Cardiac septum (tissue), 1 donor: ENCODE measurements at regions of chr1 and their contacts with region 1.

Region 1: DNA sequence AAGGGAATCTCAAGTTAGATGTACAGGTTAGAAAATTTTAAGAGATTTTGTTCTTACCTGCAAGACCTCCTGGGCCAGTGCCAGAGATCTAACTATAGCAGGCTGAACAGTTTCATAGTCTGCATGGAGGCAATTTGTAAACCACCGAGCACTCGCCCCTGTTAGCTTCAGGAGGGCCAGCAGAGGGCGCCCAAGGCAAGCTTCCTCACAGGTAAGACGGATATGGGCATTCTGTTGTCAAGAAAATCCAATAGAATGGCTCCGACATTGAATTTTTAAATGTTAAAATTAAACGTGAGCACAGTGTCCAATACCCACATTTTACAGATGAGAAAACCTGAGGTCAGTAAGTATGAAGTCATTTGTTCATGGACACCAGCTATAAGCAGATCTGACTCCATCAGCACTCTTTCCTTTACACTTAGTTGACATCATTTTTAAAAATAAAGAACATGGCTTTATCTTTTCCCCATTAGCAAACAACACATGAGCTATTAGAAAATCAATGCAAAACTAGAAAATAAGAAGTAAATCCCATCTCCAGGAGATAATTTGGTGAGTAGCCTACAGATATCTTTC is 2.2 kb downstream of the REG4 start:
- DNase-seq: peak; percentile 84

Region 2: GRCh38 chr1:119743781-119744597 is 65.1 kb before region 1 on chr1:
- intact Hi-C with region 1: loop called (anchors 2 kb)
- DNase-seq: peak; percentile 82

Region 3: GRCh38 chr1:119885903-119886783 is 77.1 kb after region 1 on chr1:
- intact Hi-C with region 1: no loop called
- DNase-seq: no peak